ENCODE measurements at regions of chr11 and their contacts with region 1.

Region 1: DNA sequence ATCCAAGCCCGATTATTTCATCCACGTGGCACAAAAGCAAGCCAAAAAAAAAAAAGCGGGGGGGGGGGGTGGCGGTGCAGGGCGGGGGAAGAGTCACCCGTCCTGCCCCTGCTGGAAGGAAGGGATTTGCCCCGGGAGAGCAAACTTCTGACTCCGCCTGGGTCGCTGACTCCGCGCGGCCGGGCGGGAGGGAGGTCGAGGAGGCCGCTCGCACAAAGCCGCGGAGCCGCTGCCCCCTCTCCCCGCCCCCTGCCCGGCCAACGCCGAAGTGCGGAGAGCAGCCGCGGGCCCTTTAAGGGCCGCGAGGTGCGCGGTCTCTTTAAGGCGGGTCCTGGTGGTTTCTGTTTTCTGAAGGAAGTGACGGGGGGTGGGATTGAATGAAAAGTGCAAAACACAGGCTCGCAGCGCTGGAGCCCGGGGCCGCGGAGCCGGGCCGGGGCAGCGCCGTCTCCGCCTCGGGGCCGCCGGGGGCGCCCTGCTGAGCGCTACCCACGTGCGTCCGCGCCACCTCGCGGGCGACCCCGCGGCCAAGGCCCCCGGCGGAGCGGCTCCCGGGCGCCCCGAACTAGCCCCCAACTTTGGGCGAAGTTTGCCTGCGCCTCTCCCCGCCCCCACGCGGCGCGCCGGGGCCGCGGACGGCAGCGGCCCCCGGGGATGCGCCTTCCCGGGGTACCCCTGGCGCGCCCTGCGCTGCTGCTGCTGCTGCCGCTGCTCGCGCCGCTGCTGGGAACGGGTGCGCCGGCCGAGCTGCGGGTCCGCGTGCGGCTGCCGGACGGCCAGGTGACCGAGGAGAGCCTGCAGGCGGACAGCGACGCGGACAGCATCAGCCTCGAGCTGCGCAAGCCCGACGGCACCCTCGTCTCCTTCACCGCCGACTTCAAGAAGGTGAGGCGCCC is at the start of gene OAF:
- DNase-seq: peak; percentile 80 to 88 (median 81)
- ATAC-seq: peak; percentile 55 to 88 (median 82)
- H3K4me3 ChIP-seq: peak within 1 kb of the TSS; percentile 54 to 94 (median 72)
- H3K27ac ChIP-seq: peak within 1 kb of the TSS; percentile 67 to 87 (median 77)
- H3K4me1 ChIP-seq: peaks cover 0 to 67% (median 34%) of the 10 kb centered on the region in 12 donors
- H3K27me3 ChIP-seq: no peaks in the 10 kb centered on the region
- CTCF ChIP-seq: peak in 9 of 12 donors; percentile 4 to 40 (median 17)
- POLR2A ChIP-seq: peak in 1 of 2 donors; percentile 45
- total RNA-seq, gene OAF: 10.3 to 41.9 (median 19.9) TPM

Region 2: DNA sequence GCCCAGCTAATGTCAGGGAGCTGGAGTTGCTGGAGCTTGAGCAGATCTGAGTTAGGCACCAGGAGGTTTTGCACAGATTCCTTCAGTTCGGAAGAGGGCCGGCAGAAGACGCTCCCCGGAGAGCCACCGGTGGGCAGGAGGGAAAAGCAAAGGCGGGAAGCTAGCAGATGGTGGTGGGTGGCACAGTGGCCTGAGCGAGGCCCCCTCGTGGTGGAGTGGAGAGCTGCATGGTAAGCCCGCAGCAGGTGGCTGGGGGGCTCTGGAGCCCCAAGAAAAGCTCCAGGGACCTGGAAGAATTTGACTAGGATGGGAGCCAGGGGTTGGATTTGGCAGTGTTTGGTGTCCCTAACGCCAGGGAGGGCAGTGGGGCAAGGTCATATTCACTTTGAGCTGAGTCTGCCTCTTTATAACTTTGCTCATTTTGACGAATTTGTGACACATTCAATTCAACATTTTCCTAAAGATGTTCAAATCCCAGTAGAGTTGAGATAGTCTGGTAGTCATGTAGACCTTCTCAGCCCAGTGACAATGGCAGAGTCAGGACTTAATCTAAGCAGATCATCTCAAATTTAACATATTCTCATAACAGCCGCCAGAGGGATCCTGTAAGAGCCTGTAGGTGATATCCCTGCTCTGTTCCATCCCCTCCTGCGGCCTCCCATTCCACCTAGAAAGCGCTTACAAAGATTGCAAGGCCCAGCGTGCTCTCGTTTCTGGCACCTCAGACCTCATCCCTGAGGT is 131.0 kb before region 1 on chr11:
- intact Hi-C with region 1: no loop called
- DNase-seq: peak in 2 of 5 donors; percentile 42 to 68
- ATAC-seq: peak in 3 of 4 donors; percentile 47 to 62 (median 51)
- H3K4me3 ChIP-seq: no peak overlapping the region
- H3K27ac ChIP-seq: no peak overlapping the region
- H3K4me1 ChIP-seq: no peaks in the 10 kb centered on the region
- H3K27me3 ChIP-seq: peaks cover 0 to 17% (median 3%) of the 10 kb centered on the region in 9 donors
- CTCF ChIP-seq: peak; percentile 51 to 73 (median 62)
- POLR2A ChIP-seq: no peak

Region 3: GRCh38 chr11:120182790-120183491 is 27.9 kb before region 1 on chr11:
- intact Hi-C with region 1: loop called in 4 of 10 experiments (anchors 2 to 5 kb)
- DNase-seq: peak in 4 of 5 donors; percentile 45 to 66 (median 62)
- ATAC-seq: no peak
- H3K4me3 ChIP-seq: no peak overlapping the region
- H3K27ac ChIP-seq: peak overlapping the region in 10 of 12 donors; percentile 62 to 96 (median 81)
- H3K4me1 ChIP-seq: peaks cover 0 to 87% (median 37%) of the 10 kb centered on the region in 12 donors
- H3K27me3 ChIP-seq: peaks cover 0 to 5% (median 0%) of the 10 kb centered on the region in 9 donors
- CTCF ChIP-seq: peak in 11 of 12 donors; percentile 14 to 51 (median 26)
- POLR2A ChIP-seq: no peak

Region 4: GRCh38 chr11:120324932-120325810 is 114.3 kb after region 1 on chr11 and contains the start of gene TLCD5:
- intact Hi-C with region 1: no loop called
- DNase-seq: peak; percentile 76 to 84 (median 81)
- ATAC-seq: peak; percentile 33 to 82 (median 76)
- H3K4me3 ChIP-seq: peak within 1 kb of the TSS; percentile 63 to 97 (median 78)
- H3K27ac ChIP-seq: peak within 1 kb of the TSS; percentile 87 to 98 (median 94)
- H3K4me1 ChIP-seq: peaks cover 0 to 32% (median 20%) of the 10 kb centered on the region in 12 donors
- H3K27me3 ChIP-seq: peaks cover 0 to 42% (median 0%) of the 10 kb centered on the region in 9 donors
- CTCF ChIP-seq: peak in 4 of 12 donors; percentile 8 to 37 (median 28)
- POLR2A ChIP-seq: peak in 1 of 2 donors; percentile 85
- total RNA-seq, gene TLCD5: 9.4 to 15.0 (median 10.3) TPM

Region 5: GRCh38 chr11:120467627-120468026 is 256.8 kb after region 1 on chr11:
- intact Hi-C with region 1: no loop called
- DNase-seq: no peak
- ATAC-seq: no peak
- H3K4me3 ChIP-seq: no peak overlapping the region
- H3K27ac ChIP-seq: no peak overlapping the region
- H3K4me1 ChIP-seq: peaks cover 0 to 8% (median 0%) of the 10 kb centered on the region in 12 donors
- H3K27me3 ChIP-seq: no peaks in the 10 kb centered on the region
- CTCF ChIP-seq: no peak
- POLR2A ChIP-seq: no peak

Measured in heart left ventricle (tissue), 16 donors.